Activated CD8-positive, alpha-beta T cell treated with anti-CD3 and anti-CD28 coated beads, Interleukin-2, amount 10 ng/mL, durations not matched to agents 7 days and 5 days (primary cell): ENCODE measurements at regions of chr1 and their contacts with region 1.

Region 1: GRCh38 chr1:150561974-150562445 is 12.8 kb downstream of the ADAMTSL4 start:
- DNase-seq: peak; percentile 92
- ATAC-seq: peak; percentile 60
- H3K4me3 Mint-ChIP-seq: peak overlapping the region; percentile 90
- H3K27ac Mint-ChIP-seq: peak overlapping the region; percentile 99
- H3K4me1 Mint-ChIP-seq: peaks cover 67% of the 10 kb centered on the region
- H3K27me3 Mint-ChIP-seq: no peaks in the 10 kb centered on the region

Region 2: DNA sequence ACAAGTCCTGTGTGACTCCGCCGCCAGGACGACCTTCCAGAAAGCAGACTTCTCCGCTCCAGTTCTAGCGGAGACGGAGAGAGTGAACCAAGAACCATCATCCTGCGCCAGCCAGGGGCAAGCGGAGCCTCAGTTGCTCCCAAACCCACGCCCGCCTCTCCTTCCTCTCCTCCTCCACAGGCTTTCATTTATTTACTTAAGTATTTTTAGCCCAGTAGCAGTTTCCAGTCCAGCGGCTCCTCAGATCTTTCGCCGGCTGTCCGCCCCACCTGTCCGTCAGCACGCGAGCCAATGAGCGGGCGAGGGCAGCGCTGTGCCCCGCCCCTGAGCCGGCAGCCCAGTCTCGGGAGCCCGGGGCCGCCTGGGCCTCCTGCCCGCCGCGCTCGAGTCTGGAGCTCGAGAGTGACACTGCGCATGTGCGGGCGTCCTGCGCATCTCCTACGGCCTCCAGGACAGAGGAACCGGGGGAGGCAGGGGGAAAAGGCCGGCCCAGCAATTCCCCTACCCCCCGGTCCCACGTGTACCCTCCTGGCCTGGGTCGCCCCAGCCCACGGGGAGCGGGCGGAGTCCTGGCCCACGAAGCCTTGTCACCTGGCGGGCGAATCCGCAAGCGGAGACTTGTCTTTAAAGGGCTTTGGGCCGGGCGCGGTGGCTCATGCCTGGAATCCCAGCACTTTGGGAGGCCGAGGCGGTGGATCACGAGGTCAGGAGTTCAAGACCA is 46.5 kb before region 1 on chr1 and contains the start of gene FALEC:
- CTCF ChIA-PET with region 1: interaction called, 19 read pairs
- POLR2A ChIA-PET with region 1: interaction called, 3 read pairs
- DNase-seq: peak; percentile 92
- ATAC-seq: peak; percentile 100
- H3K4me3 Mint-ChIP-seq: peak within 1 kb of the TSS; percentile 90
- H3K27ac Mint-ChIP-seq: peak within 1 kb of the TSS; percentile 81
- H3K4me1 Mint-ChIP-seq: peaks cover 18% of the 10 kb centered on the region
- H3K27me3 Mint-ChIP-seq: no peaks in the 10 kb centered on the region
- total RNA-seq, gene FALEC: not detected

Region 3: DNA sequence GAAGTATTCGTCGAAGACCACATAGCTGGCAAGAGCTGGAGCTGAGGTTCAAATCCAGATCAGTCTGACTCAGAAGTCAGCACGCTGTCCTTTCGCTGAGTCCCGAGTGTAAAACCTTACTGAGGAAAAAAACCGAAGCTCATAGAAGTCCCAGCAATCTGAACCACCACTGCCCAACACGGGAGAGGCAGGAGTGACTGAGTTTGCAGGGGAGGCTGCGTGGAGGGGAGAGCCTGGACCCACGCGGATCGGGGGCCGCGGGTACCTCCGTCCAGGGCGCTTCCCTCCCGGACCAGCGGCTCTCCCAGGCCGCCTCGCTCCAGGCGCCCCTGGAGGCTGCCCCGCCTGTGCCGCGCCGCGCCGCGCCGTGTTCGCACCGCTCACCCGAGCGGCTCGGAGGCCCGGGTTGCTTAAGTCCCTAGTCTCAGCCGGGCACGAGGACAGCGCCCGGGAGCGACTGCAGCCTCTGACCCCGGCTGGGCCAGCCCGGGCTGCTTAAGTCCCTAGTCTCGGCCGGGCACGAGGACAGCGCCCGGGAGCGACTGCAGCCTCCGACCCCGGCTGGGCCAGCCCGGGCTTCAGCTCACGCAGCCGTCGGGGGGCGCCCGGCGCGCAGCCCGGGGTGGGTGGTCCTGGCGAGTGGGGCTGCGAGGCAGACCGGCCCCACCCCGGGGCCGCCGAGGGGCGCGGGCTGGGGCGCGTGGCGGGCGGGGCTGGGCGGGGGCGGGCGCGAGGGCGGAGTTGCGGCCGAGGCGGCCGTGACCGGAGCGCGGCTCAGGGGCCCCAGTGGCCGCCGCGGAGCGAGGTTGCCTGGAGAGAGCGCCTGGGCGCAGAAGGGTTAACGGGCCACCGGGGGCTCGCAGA is 13.1 kb before region 1 on chr1 and contains the start of gene ADAMTSL4:
- CTCF ChIA-PET with region 1: interaction called, 37 read pairs
- POLR2A ChIA-PET with region 1: interaction called, 6 read pairs
- DNase-seq: peak; percentile 51
- ATAC-seq: peak; percentile 88
- H3K4me3 Mint-ChIP-seq: peak within 1 kb of the TSS; percentile 73
- H3K27ac Mint-ChIP-seq: no peak within 1 kb of the TSS
- H3K4me1 Mint-ChIP-seq: peaks cover 36% of the 10 kb centered on the region
- H3K27me3 Mint-ChIP-seq: peaks cover 25% of the 10 kb centered on the region
- total RNA-seq, gene ADAMTSL4: not detected

Region 4: GRCh38 chr1:150606463-150607148 is 44.6 kb after region 1 on chr1:
- CTCF ChIA-PET with region 1: interaction called, 16 read pairs
- POLR2A ChIA-PET with region 1: interaction called, 169 read pairs
- DNase-seq: no peak
- ATAC-seq: no peak
- H3K4me3 Mint-ChIP-seq: no peak overlapping the region
- H3K27ac Mint-ChIP-seq: no peak overlapping the region
- H3K4me1 Mint-ChIP-seq: peaks cover 17% of the 10 kb centered on the region
- H3K27me3 Mint-ChIP-seq: no peaks in the 10 kb centered on the region

Region 5: DNA sequence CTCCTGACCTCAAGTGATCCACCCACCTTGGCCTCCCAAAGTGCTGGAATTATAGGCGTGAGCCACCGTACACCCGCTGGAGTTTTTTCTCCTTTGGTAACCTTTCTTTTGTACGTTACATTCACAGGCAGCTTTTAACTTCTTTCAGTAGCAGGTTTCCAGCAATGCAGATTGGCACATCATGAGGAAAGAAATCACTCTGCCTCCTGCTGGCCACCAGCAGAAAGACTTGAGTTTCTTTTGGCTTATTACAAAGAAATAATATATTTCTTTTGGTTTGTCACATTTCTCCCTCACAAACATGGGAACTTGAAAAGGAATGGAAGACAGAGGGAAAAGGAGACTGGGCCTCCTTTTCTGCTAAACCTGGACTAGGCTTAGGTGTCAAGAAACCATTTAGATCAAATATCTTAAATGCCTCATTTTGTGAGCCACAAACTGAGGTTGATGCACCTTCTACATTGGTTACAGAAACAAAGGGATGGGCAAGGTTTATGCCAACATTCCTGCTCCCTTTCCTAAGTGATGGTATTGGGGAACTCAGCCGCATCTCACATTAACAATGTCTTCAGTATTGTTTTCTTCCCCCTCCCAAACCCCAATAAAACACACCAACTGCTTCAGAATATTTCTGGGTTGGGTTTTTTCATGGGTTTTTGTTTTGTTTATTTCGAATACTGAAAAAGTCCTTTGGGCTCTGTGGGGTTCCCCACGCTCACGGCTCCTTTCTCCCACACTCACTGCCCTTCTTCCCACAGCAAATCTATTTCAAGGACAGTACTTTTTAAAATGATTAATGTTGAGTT is 59.7 kb after region 1 on chr1:
- CTCF ChIA-PET with region 1: interaction called, 386 read pairs
- POLR2A ChIA-PET with region 1: interaction called, 169 read pairs
- DNase-seq: peak; percentile 72
- ATAC-seq: peak; percentile 37
- H3K4me3 Mint-ChIP-seq: no peak overlapping the region
- H3K27ac Mint-ChIP-seq: peak overlapping the region; percentile 80
- H3K4me1 Mint-ChIP-seq: peaks cover 46% of the 10 kb centered on the region
- H3K27me3 Mint-ChIP-seq: no peaks in the 10 kb centered on the region

Region 6: DNA sequence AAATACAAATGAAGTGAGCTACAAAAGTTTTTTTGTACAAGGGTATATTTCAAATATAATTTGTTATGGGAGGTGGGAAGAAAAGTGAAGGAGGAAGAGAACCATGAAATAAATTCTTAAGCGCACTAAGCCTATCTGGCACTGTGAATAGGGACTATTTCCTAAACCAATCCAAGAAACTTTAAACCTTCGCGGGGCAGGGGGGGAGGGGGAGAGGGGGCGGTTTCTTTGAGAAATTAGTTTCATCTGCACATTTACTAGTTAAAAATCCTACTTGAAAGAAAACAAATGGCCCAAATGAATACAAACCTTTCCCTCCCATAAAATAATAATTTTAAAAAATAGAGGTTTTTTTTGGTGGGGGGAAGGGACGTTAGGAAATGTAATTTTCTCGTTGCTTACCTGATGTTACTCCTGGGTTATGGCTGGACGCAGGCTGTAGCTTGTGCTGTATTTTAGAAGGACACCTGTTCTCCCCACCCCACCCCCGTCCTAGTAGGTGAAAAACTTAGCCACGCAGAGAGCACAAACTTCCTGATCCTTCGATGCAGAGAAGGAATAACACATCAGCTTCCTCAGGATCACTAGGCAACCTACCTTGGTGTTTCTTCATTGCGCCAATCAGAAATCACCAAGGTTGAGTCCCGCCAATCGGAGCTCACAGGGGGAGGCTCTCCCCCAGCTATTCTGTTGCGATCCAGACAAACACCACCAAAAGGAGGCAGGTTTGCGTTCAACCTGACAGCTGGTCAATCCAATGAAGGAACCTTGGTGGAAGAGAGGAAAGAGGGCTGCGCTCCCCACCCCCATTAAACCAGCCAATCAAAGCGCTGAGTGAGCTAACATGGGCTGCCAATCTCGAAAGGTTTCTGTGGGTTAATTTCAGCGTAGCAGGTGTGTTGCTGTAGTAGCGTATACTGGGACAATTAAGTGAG is 134.8 kb after region 1 on chr1 and contains the start of gene GOLPH3L:
- CTCF ChIA-PET with region 1: interaction called, 13 read pairs
- POLR2A ChIA-PET with region 1: interaction called, 7 read pairs
- DNase-seq: peak; percentile 96
- ATAC-seq: peak; percentile 100
- H3K4me3 Mint-ChIP-seq: peak within 1 kb of the TSS; percentile 93
- H3K27ac Mint-ChIP-seq: peak within 1 kb of the TSS; percentile 83
- H3K4me1 Mint-ChIP-seq: peaks cover 18% of the 10 kb centered on the region
- H3K27me3 Mint-ChIP-seq: peaks cover 8% of the 10 kb centered on the region
- total RNA-seq, gene GOLPH3L: 19.4 to 21.2 TPM

Region 7: DNA sequence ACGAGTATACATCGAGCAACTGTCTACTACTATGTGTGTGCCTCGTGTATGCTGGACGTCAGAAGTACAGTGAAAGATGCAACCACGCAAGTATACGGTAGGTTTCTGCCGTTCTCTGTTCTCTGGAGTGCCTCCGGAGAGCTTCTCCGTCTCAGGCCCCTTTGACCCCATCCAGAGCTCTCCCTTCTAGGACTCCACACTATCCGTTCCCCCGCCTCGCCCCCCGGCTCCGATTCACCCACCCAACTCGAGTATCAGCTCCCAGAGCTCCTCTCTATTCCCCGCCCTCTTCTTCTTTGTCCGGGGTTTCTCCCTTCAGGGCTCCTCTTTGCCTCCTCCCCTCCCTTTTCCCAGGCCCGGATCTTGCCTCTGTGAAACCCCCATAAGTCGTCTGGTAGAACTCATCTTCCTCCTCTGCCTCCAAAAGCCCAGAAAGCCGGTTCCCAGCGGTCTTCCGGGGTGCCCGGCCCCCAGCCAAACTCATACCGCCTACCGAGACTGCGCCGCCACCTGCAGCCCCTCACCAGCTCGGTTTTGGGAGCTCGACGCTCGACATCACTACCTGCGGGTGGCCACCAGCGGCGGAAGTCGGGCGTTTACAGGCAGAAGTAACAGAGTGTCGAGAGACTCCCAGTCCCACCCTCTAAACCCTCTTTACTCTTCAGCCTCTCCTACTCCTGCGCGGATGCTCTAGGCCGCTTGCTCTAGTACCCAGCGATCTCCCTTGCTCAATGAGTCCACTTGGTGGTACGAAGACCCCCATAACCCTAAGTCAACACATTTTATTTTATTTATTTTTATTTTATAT is 627.8 kb after region 1 on chr1 and contains the start of gene VPS72:
- CTCF ChIA-PET with region 1: no interaction called
- POLR2A ChIA-PET with region 1: no interaction called
- DNase-seq: peak; percentile 92
- ATAC-seq: peak; percentile 96
- H3K4me3 Mint-ChIP-seq: peak within 1 kb of the TSS; percentile 100
- H3K27ac Mint-ChIP-seq: peak within 1 kb of the TSS; percentile 99
- H3K4me1 Mint-ChIP-seq: peaks cover 28% of the 10 kb centered on the region
- H3K27me3 Mint-ChIP-seq: peaks cover 3% of the 10 kb centered on the region
- total RNA-seq, gene VPS72: 59.8 to 61.7 TPM

Region 8: DNA sequence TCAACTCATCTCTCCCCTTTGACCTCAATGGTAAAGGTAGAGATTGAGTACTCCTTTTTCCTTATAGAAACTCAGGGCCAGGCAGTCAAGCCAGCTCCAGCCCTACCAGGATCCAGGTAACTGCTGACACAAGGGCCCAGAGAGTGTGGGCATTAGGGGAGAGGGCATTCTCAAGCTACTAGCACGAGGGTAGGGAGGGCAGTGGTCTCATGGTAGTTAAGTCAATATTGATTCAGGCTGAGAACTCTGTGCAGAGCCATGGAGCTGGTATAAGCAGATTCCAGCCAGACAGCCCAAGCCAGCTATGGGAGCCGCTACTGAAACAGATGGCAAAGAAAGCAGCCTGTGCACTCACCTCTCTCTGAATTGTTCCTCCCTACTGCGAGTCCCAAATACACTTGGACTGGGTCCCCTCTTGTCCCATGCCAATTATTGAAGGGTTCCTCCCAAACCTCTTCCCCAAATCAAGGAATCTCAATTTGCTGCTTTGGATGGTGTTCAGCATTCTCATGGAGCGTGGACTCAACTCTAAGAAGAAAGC is 762.5 kb after region 1 on chr1:
- CTCF ChIA-PET with region 1: no interaction called
- POLR2A ChIA-PET with region 1: no interaction called
- DNase-seq: no peak
- ATAC-seq: no peak
- H3K4me3 Mint-ChIP-seq: no peak overlapping the region
- H3K27ac Mint-ChIP-seq: no peak overlapping the region
- H3K4me1 Mint-ChIP-seq: peaks cover 42% of the 10 kb centered on the region
- H3K27me3 Mint-ChIP-seq: no peaks in the 10 kb centered on the region